A549 (cell line): ENCODE measurements at regions of chr20 and their contacts with region 1.

Region 1: DNA sequence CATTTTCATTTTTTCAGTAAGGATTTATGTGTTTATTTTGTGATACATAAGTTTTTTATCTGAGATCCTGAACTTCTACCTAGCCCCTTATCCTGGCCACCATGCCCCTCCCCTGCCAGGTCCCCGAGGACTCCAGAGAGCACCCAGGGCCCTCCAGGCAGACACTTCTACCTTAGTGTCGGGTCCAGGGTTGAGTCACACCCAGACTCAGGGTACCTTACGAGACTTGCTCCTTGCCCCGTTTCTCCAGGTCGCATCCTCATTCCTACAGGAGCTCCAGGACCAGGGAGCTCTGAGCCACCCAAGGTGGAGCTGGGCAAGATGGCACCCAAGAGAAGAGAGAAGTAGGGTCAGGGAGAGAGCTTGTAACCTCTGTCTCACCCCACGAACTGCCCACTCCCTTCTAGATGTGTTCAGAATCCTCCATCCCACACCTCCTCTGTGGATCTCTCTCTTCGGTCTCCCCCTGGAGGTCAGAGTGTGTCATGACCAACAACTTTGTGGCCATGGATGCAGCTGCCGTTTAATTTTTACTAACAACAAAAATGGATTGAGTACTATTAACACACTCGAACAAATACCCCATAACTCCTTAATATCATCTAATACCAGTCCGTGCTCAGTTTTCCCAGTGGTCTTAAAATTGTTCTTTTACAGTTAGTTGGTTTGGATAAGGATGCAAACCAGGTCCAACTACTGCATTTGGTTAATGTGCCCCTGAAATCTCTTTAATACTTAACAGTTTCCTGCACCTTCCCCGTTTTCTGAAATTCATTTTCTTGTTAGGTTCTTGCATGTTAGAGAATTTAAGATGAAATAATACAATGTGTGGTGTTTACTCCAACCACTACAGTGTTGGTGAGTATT is 130.6 kb upstream of the INSM1 start:
- DNase-seq: peak; percentile 40 to 76
- ATAC-seq: peak; percentile 78 to 93
- H3K4me3 ChIP-seq: no peak overlapping the region
- H3K27ac ChIP-seq: no peak overlapping the region
- H3K4me1 ChIP-seq: no peaks in the 10 kb centered on the region
- CTCF ChIP-seq: peak; percentile 60
- EP300 ChIP-seq: no peak
- POLR2A ChIP-seq: no peak
- RAD21 ChIP-seq: peak; percentile 46 to 61; a peak in 4 of 5 replicates

Region 2: GRCh38 chr20:20251317-20251716 is 14.0 kb after region 1 on chr20:
- CTCF ChIA-PET with region 1: interaction called, 11 read pairs
- POLR2A ChIA-PET with region 1: no interaction called
- DNase-seq: no peak
- ATAC-seq: no peak
- H3K4me3 ChIP-seq: no peak overlapping the region
- H3K27ac ChIP-seq: no peak overlapping the region
- H3K4me1 ChIP-seq: no peaks in the 10 kb centered on the region
- CTCF ChIP-seq: no peak
- EP300 ChIP-seq: no peak
- POLR2A ChIP-seq: no peak
- RAD21 ChIP-seq: no peak